ENCODE measurements at regions of chr7 and their contacts with region 1.

Region 1: DNA sequence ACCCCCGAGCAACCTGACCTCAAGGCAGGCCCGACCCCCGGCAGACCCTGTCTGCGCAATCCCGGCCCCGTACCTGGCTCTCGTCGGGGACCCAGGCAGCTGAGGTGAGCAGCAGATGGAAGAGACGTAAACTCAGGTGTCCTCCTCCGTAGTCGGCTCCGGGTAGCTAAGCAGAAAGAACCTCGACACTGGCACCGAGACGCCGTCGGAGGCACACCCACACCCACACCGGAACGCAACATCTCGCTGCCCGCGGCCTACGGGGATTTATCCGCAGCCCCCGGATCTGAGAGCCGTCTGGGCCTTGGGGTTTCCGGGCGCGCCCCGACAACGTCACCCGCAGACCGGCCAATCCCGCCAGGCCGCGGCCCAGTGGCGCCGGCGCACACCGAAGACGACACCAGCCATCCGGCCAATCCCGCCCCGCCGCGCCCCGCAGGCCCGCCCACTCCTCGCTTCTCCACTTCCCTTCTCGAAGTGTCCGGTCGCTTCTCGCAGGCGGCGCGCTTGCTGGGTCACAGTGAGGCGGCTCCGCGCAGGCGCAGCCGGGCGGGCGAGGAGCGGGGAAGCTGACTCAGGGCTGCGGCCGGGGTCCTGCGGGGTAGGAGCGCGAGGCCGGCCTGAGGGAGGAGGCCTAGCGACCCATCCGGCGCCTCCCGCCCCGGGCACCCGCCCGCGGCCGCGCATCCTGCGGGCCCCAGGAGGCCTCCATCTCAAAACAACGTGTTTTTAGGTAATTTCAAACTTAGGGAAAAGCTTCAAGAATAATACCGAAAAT is at the start of gene ZFAND2A:
- DNase-seq: peak; percentile 92
- ATAC-seq: peak; percentile 71
- H3K4me3 ChIP-seq: peak within 1 kb of the TSS; percentile 73 to 100 (median 97)
- H3K27ac ChIP-seq: peak within 1 kb of the TSS; percentile 92
- H3K4me1 ChIP-seq: peaks cover 44% of the 10 kb centered on the region
- H3K27me3 ChIP-seq: no peaks in the 10 kb centered on the region; a peak in 1 of 5 replicates
- CTCF ChIP-seq: no peak
- EP300 ChIP-seq: peak in 1 of 2 experiments; percentile 12; a peak in 1 of 4 replicates
- POLR2A ChIP-seq: peak; percentile 66 to 75
- RAD21 ChIP-seq: no peak; the same call in 1 of the 2 replicates
- total RNA-seq, gene ZFAND2A: 140 and 171 TPM in 2 replicates

Region 2: GRCh38 chr7:1092806-1093501 is 67.1 kb before region 1 on chr7:
- CTCF ChIA-PET with region 1: no interaction called
- POLR2A ChIA-PET with region 1: interaction called, 34 read pairs
- in situ Hi-C with region 1: loop called (anchors 5 kb)
- intact Hi-C with region 1: no loop called
- DNase-seq: peak; percentile 84
- ATAC-seq: peak; percentile 88
- H3K4me3 ChIP-seq: peak overlapping the region in 1 of 3 experiments; percentile 46; a peak in 1 of 6 replicates
- H3K27ac ChIP-seq: peak overlapping the region; percentile 86
- H3K4me1 ChIP-seq: peaks cover 62% of the 10 kb centered on the region
- H3K27me3 ChIP-seq: no peaks in the 10 kb centered on the region
- CTCF ChIP-seq: peak; percentile 33; the same call in 1 of the 2 replicates
- EP300 ChIP-seq: no peak
- POLR2A ChIP-seq: 0 out of 4 replicates have a peak, but pooled peaks of 1 of the 2 experiments have one; percentile 44
- RAD21 ChIP-seq: no peak; the same call in none of the 2 replicates

Region 3: DNA sequence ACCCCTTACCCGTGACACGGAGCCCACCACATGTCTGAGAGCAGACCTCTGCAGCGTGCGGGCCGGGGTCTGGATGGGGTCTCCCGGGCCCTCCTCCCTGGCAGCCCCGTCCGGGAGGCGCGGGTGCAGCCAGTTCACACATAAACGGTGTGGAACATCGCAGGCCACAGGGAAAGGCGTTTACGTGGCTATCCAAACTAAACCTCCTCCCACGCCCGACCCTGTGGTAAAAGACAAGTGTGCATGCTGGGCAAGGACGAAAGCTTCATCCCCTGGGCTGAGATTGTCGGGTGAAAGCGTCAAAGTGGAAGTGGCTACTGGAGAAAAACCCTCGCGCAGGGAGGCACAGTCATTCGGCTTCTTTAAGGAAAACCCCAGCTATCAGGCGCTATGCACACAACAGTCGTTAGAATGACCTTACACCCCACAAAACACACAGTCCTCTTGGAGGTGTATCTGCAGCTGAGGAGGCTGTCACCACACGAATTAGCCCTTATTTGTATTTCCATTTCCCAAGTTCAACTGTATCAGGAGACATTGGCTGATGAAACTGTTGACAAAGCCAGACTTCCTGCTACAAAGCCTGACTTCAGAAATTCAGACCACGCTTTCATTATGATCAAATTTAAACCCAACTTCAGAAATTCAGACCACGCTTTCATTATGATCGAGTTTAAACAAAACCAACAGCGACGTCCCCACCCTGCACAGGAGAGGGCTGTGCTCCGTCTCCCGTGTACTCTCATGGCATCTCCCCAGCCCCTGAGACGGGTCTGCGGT is 56.9 kb before region 1 on chr7:
- CTCF ChIA-PET with region 1: no interaction called
- POLR2A ChIA-PET with region 1: interaction called, 32 read pairs
- in situ Hi-C with region 1: no loop called
- intact Hi-C with region 1: no loop called
- DNase-seq: peak; percentile 41
- ATAC-seq: peak; percentile 22; the same call in 2 of the 3 replicates
- H3K4me3 ChIP-seq: no peak overlapping the region
- H3K27ac ChIP-seq: no peak overlapping the region
- H3K4me1 ChIP-seq: peaks cover 34% of the 10 kb centered on the region
- H3K27me3 ChIP-seq: no peaks in the 10 kb centered on the region
- CTCF ChIP-seq: no peak
- EP300 ChIP-seq: no peak
- POLR2A ChIP-seq: no peak
- RAD21 ChIP-seq: no peak

Region 4: DNA sequence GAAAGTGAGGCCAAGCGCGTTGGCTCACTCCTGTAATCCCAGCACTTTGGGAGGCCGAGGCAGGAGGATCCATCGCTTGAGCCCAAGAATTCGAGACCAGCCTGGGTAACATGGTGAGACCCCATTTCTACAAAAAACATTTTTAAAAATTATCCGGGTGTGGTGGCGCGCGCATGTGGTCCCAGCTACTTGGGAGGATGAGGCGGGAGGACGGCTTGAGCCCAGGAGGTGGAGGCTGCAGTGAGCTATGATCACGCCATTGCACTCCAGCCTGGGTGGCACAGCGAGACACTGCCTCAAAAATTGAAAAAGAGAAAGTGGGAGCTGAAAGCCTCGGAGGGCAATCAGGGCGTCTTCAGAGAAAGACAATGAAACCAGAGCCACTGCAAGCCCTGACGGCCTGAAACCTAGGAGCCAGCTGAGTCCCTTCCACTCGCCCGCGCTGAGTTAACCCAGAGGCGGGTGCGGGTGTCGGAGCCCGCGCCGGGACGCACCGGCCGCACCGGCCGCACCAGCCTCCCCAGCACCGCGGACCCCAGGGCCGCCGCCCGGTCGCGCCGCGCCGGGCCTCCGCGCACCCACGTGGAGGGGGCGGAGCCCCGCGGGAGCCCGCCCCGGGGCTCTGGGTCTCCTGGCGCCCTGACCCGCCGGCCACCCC is 22.4 kb before region 1 on chr7:
- CTCF ChIA-PET with region 1: no interaction called
- POLR2A ChIA-PET with region 1: interaction called, 47 read pairs
- in situ Hi-C with region 1: no loop called
- intact Hi-C with region 1: loop called (anchors 2 kb)
- DNase-seq: no peak
- ATAC-seq: peak; percentile 84
- H3K4me3 ChIP-seq: peak overlapping the region; percentile 83 to 97 (median 96)
- H3K27ac ChIP-seq: peak overlapping the region; percentile 46
- H3K4me1 ChIP-seq: peaks cover 13% of the 10 kb centered on the region; the same call in 1 of the 2 replicates
- H3K27me3 ChIP-seq: no peaks in the 10 kb centered on the region
- CTCF ChIP-seq: no peak
- EP300 ChIP-seq: no peak
- POLR2A ChIP-seq: no peak
- RAD21 ChIP-seq: no peak

Region 5: GRCh38 chr7:1175967-1176851 is 16.1 kb after region 1 on chr7:
- CTCF ChIA-PET with region 1: no interaction called
- POLR2A ChIA-PET with region 1: interaction called, 116 read pairs
- in situ Hi-C with region 1: no loop called
- intact Hi-C with region 1: no loop called
- DNase-seq: peak; percentile 70
- ATAC-seq: peak; percentile 83
- H3K4me3 ChIP-seq: peak overlapping the region; percentile 27 to 65 (median 37); a peak in 5 of 6 replicates
- H3K27ac ChIP-seq: peak overlapping the region; percentile 57
- H3K4me1 ChIP-seq: peaks cover 26% of the 10 kb centered on the region
- H3K27me3 ChIP-seq: peaks cover 3 to 9% of the 10 kb centered on the region in 2 experiments; a peak in 2 of 5 replicates
- CTCF ChIP-seq: peak; percentile 98
- EP300 ChIP-seq: no peak
- POLR2A ChIP-seq: peak in 1 of 2 experiments; percentile 53; a peak in 2 of 4 replicates
- RAD21 ChIP-seq: peak; percentile 83

Region 6: GRCh38 chr7:1234881-1235500 is 74.9 kb after region 1 on chr7:
- CTCF ChIA-PET with region 1: no interaction called
- POLR2A ChIA-PET with region 1: no interaction called
- in situ Hi-C with region 1: no loop called
- intact Hi-C with region 1: no loop called
- DNase-seq: no peak
- ATAC-seq: peak; percentile 10; the same call in 2 of the 3 replicates
- H3K4me3 ChIP-seq: no peak overlapping the region
- H3K27ac ChIP-seq: no peak overlapping the region
- H3K4me1 ChIP-seq: no peaks in the 10 kb centered on the region
- H3K27me3 ChIP-seq: peaks cover 19 to 74% of the 10 kb centered on the region in 2 experiments
- CTCF ChIP-seq: no peak
- EP300 ChIP-seq: no peak
- POLR2A ChIP-seq: no peak
- RAD21 ChIP-seq: no peak

Measured in HepG2 (cell line).